ENCODE measurements at regions of chr12 and their contacts with region 1.

Region 1: GRCh38 chr12:93766796-93767523 is 89.8 kb downstream of the CRADD start:
- DNase-seq: peak in 5 of 9 experiments; percentile 9 to 63 (median 43)
- ATAC-seq: peak; percentile 75
- H3K4me3 ChIP-seq: no peak overlapping the region
- H3K4me3 Mint-ChIP-seq: no peak overlapping the region
- H3K27ac ChIP-seq: peak overlapping the region in 1 of 2 experiments; percentile 17
- H3K27ac Mint-ChIP-seq: no peak overlapping the region
- H3K4me1 ChIP-seq: peaks cover 7% of the 10 kb centered on the region
- H3K4me1 Mint-ChIP-seq: peaks cover 23% of the 10 kb centered on the region
- H3K27me3 ChIP-seq: no peaks in the 10 kb centered on the region
- H3K27me3 Mint-ChIP-seq: no peaks in the 10 kb centered on the region
- CTCF ChIP-seq: peak; percentile 58

Region 2: GRCh38 chr12:93502802-93503623 is 263.9 kb before region 1 on chr12:
- CTCF ChIA-PET with region 1: interaction called, 24 read pairs
- POLR2A ChIA-PET with region 1: no interaction called
- intact Hi-C with region 1: loop called (anchors 2 to 5 kb)
- DNase-seq: peak; percentile 34 to 72 (median 64)
- ATAC-seq: peak; percentile 36
- H3K4me3 ChIP-seq: no peak overlapping the region
- H3K4me3 Mint-ChIP-seq: no peak overlapping the region
- H3K27ac ChIP-seq: no peak overlapping the region
- H3K27ac Mint-ChIP-seq: no peak overlapping the region
- H3K4me1 ChIP-seq: no peaks in the 10 kb centered on the region
- H3K4me1 Mint-ChIP-seq: no peaks in the 10 kb centered on the region
- H3K27me3 ChIP-seq: no peaks in the 10 kb centered on the region
- H3K27me3 Mint-ChIP-seq: no peaks in the 10 kb centered on the region
- CTCF ChIP-seq: peak; percentile 95

Region 3: DNA sequence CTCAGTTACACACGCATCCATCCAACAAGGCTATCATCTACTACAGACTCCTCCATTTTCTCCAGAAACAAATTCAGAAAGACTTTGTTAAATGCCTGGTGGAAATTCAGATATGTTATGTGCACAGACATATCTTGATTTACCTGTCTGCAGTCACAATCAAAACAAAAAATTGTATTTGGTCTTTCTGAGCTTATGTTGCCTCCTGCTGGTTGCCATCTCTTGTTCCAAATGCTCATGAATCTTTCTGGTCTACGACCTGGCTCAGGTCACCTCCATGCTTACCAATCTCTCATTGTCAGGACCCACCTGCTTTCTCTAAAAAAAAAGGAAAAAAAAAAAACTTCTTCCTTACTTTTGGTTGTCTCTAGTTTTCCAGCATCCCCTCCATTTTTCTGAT is 212.2 kb after region 1 on chr12:
- CTCF ChIA-PET with region 1: interaction called, 3 read pairs
- POLR2A ChIA-PET with region 1: no interaction called
- intact Hi-C with region 1: loop called (anchors 5 kb)
- DNase-seq: peak in 4 of 9 experiments; percentile 3 to 54 (median 32)
- ATAC-seq: no peak
- H3K4me3 ChIP-seq: no peak overlapping the region
- H3K4me3 Mint-ChIP-seq: no peak overlapping the region
- H3K27ac ChIP-seq: no peak overlapping the region
- H3K27ac Mint-ChIP-seq: no peak overlapping the region
- H3K4me1 ChIP-seq: no peaks in the 10 kb centered on the region
- H3K4me1 Mint-ChIP-seq: peaks cover 7% of the 10 kb centered on the region
- H3K27me3 ChIP-seq: no peaks in the 10 kb centered on the region
- H3K27me3 Mint-ChIP-seq: no peaks in the 10 kb centered on the region
- CTCF ChIP-seq: peak; percentile 28

Region 4: DNA sequence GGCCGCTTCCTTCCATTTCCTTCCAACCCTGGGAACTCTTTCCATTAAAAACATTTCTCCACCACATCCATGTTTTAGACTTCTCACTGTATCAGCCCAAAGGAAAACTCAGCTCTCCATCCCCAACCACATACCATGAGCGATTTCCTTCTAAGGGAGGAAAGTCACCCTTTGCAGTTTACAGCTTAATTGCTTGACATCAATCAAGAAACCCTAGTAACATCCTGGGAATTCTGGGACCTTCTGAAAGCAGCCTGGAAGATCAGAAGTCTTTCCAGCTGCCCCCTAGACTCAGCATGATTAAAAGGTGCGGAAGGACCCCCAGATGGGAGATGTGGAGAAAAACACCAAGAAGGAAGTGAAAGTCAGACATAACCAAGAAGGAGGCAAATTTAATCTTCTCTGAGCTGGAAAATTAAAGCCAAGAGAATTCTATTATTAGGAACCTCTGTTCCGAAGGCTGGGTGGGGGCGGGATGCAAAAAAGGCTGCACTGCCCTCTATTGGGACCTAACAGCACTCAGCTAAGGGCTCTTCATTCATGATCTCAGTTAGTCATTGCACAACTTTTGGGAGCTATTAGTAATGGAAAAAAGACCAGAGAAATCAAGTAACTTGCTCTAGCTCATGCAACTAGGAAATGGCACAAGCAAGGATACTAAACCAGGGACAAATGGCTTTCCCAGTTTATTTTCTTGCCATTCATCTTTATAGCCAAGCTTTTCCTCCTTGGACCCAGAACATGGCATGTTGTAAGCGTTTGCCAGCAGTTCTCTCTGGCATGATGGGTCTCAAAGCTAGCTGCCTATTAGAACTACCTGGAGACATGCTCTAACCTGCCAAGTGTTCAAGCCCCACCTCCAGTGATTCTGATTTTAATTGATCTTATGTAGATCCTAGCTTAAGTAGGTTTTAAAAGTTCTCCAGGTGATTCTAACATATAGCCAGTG is 308.3 kb after region 1 on chr12:
- CTCF ChIA-PET with region 1: interaction called, 10 read pairs
- POLR2A ChIA-PET with region 1: no interaction called
- intact Hi-C with region 1: no loop called
- DNase-seq: peak in 2 of 9 experiments; percentile 13 to 38
- ATAC-seq: no peak
- H3K4me3 ChIP-seq: no peak overlapping the region
- H3K4me3 Mint-ChIP-seq: no peak overlapping the region
- H3K27ac ChIP-seq: no peak overlapping the region
- H3K27ac Mint-ChIP-seq: no peak overlapping the region
- H3K4me1 ChIP-seq: peaks cover 6% of the 10 kb centered on the region
- H3K4me1 Mint-ChIP-seq: peaks cover 15% of the 10 kb centered on the region
- H3K27me3 ChIP-seq: no peaks in the 10 kb centered on the region
- H3K27me3 Mint-ChIP-seq: peaks cover 10% of the 10 kb centered on the region
- CTCF ChIP-seq: peak; percentile 17

Region 5: DNA sequence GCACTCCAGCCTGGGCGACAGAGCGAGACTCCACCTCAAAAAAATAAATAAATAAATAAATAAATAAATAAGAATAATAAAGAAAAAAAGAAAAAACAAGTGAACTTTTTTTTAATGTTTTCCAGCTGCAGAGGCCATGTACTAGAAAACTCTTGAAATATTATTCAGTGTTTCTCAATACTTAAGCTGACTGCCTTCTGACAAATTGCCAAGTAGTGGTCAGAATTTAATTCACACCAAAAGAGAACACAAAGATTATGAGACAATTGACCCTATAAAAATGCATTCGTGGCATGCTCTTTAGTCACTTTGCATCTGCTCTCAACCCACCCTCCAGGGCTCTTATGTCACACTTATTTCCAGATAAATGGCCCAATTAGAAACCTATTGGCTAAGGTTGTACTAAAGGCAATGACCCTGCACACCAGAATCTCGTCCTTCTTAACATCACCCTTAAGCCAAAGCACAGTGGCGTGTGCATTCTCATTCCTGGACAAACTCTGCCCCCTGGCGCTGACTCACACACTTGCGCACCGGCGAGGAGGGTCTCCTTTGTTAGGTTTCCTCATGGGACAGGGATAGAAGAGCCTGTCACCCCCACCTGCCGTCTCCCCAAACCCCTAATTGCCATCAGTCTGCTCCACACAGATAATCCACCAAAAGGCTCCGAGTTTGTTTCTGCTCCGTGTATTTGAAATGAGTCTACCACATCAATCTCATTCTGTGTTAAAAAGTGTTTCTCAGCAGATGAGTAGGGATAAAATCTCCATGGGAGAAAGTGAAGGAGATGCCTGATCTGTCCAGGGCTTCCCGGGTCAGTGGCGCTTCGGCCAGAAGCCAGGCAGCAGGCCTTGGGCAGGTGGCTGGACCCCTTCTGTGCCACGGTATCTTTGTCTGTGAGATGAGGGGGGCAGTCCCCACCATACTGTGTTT is 765.8 kb after region 1 on chr12:
- CTCF ChIA-PET with region 1: no interaction called
- POLR2A ChIA-PET with region 1: no interaction called
- intact Hi-C with region 1: loop called in 1 of 2 experiments (anchors 5 kb)
- DNase-seq: peak; percentile 47 to 79 (median 70)
- ATAC-seq: peak; percentile 79
- H3K4me3 ChIP-seq: no peak overlapping the region
- H3K4me3 Mint-ChIP-seq: no peak overlapping the region
- H3K27ac ChIP-seq: no peak overlapping the region
- H3K27ac Mint-ChIP-seq: no peak overlapping the region
- H3K4me1 ChIP-seq: no peaks in the 10 kb centered on the region
- H3K4me1 Mint-ChIP-seq: no peaks in the 10 kb centered on the region
- H3K27me3 ChIP-seq: no peaks in the 10 kb centered on the region
- H3K27me3 Mint-ChIP-seq: peaks cover 10% of the 10 kb centered on the region
- CTCF ChIP-seq: peak; percentile 75